ENCODE measurements at regions of chr1 and their contacts with region 1.

Region 1: DNA sequence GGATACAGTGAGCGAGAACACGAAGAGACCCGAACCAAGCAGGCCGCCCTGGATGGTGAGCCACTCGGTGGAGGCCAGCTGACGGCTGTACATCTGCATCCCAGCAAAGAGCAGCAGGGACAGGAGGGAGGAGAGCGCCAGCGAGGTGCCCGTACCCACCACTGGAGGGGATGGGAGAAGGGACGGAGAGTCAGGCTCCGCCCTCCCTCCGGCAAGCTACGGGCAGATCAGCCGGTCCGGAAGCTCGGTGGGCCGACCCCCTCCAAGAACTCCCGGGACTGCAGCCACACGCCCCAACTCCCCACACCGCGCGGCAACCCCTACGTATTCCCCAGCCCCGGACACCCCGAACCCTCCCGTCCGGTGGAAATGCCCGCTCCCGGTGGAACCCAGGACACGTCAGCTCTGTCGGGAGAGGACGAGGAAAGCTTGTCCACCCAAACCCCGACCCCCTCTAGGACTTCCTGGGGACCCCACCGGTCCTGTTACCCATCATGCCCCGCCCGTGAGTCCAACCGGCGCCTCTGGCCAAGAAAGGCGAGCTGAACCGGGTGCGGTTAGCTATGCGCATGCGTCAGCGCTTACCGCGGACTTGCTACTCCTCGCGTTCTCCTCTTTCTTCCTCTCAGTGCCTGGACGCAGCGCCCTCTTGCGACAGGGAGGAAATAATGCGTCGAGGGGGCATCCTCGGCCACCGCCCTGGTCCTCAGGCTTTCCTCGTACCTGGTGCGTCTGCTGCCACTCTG is at the start of gene KRTCAP2:
- DNase-seq: peak; percentile 87
- ATAC-seq: peak; percentile 85
- H3K4me3 Mint-ChIP-seq: peak within 1 kb of the TSS; percentile 99
- H3K27ac Mint-ChIP-seq: peak within 1 kb of the TSS; percentile 98
- H3K4me1 Mint-ChIP-seq: peaks cover 33% of the 10 kb centered on the region
- H3K27me3 Mint-ChIP-seq: no peaks in the 10 kb centered on the region
- CTCF ChIP-seq: peak; percentile 97
- total RNA-seq, gene KRTCAP2: 128 and 132 TPM in 2 replicates

Region 2: GRCh38 chr1:155050560-155051341 is 122.2 kb before region 1 on chr1 and contains the start of gene ADAM15:
- CTCF ChIA-PET with region 1: interaction called, 3 read pairs
- POLR2A ChIA-PET with region 1: interaction called, 3 read pairs
- intact Hi-C with region 1: loop called (anchors 2 kb)
- DNase-seq: peak; percentile 78
- ATAC-seq: peak; percentile 83
- H3K4me3 Mint-ChIP-seq: peak within 1 kb of the TSS; percentile 86
- H3K27ac Mint-ChIP-seq: no peak within 1 kb of the TSS
- H3K4me1 Mint-ChIP-seq: peaks cover 22% of the 10 kb centered on the region
- H3K27me3 Mint-ChIP-seq: no peaks in the 10 kb centered on the region
- CTCF ChIP-seq: peak; percentile 56
- total RNA-seq, gene ADAM15: 11.3 and 13.7 TPM in 2 replicates

Region 3: DNA sequence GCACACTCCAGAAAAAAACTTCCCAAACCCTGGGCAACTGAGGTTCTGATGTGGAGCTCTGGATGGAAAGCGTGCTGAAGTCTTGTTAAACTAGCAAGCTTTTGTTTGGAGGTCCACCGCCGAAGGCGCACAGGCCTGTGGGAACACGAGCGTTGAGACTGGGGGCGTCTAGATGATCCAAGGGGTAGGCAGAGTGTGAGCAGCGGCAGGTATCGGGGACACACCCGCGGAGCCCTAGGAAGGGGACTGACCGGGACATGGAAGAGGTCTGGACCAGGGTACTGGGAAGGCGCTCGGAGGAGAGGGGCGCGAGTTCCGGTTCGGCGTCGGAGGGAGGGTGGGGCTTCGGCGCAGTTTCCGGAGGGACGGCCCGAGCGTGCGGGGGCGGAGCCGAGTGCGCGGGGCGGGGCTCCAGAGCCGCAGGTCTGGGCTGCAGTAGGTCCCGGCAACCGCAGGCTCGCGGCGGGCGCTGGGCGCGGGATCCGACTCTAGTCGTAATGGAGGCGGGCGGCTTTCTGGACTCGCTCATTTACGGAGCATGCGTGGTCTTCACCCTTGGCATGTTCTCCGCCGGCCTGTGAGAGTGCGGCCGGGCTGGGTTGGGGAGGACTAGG is 37.4 kb before region 1 on chr1 and contains the start of gene SLC50A1:
- CTCF ChIA-PET with region 1: interaction called, 40 read pairs
- POLR2A ChIA-PET with region 1: interaction called, 92 read pairs
- intact Hi-C with region 1: loop called (anchors 1 kb)
- DNase-seq: peak; percentile 94
- ATAC-seq: peak; percentile 86
- H3K4me3 Mint-ChIP-seq: peak within 1 kb of the TSS; percentile 96
- H3K27ac Mint-ChIP-seq: peak within 1 kb of the TSS; percentile 99
- H3K4me1 Mint-ChIP-seq: peaks cover 46% of the 10 kb centered on the region
- H3K27me3 Mint-ChIP-seq: peaks cover 3% of the 10 kb centered on the region
- CTCF ChIP-seq: no peak
- total RNA-seq, gene SLC50A1: 77.3 and 85.2 TPM in 2 replicates

Region 4: GRCh38 chr1:155185351-155186066 is 12.6 kb after region 1 on chr1:
- CTCF ChIA-PET with region 1: interaction called, 13 read pairs
- POLR2A ChIA-PET with region 1: interaction called, 5 read pairs
- intact Hi-C with region 1: no loop called
- DNase-seq: peak; percentile 49
- ATAC-seq: peak; percentile 98
- H3K4me3 Mint-ChIP-seq: peak overlapping the region; percentile 44
- H3K27ac Mint-ChIP-seq: peak overlapping the region; percentile 74
- H3K4me1 Mint-ChIP-seq: peaks cover 28% of the 10 kb centered on the region
- H3K27me3 Mint-ChIP-seq: no peaks in the 10 kb centered on the region
- CTCF ChIP-seq: no peak

Region 5: GRCh38 chr1:155208541-155209311 is 35.8 kb after region 1 on chr1 and contains the start of gene MTX1:
- CTCF ChIA-PET with region 1: interaction called, 5 read pairs
- POLR2A ChIA-PET with region 1: interaction called, 14 read pairs
- intact Hi-C with region 1: loop called (anchors 1 kb)
- DNase-seq: peak; percentile 85
- ATAC-seq: peak; percentile 81
- H3K4me3 Mint-ChIP-seq: peak within 1 kb of the TSS; percentile 85
- H3K27ac Mint-ChIP-seq: peak within 1 kb of the TSS; percentile 91
- H3K4me1 Mint-ChIP-seq: peaks cover 20% of the 10 kb centered on the region
- H3K27me3 Mint-ChIP-seq: no peaks in the 10 kb centered on the region
- CTCF ChIP-seq: no peak
- total RNA-seq, gene MTX1: 36.7 and 38.2 TPM in 2 replicates

Region 6: GRCh38 chr1:155591770-155592169 is 418.9 kb after region 1 on chr1:
- CTCF ChIA-PET with region 1: no interaction called
- POLR2A ChIA-PET with region 1: no interaction called
- intact Hi-C with region 1: loop called (anchors 1 kb)
- DNase-seq: no peak
- ATAC-seq: peak; percentile 58
- H3K4me3 Mint-ChIP-seq: no peak overlapping the region
- H3K27ac Mint-ChIP-seq: no peak overlapping the region
- H3K4me1 Mint-ChIP-seq: peaks cover 3% of the 10 kb centered on the region
- H3K27me3 Mint-ChIP-seq: no peaks in the 10 kb centered on the region
- CTCF ChIP-seq: no peak

Measured in activated B cell treated with CpG ODN at 0.5 μM for 24 hours (primary cell).